ENCODE measurements at regions of chr20 and their contacts with region 1.

Region 1: DNA sequence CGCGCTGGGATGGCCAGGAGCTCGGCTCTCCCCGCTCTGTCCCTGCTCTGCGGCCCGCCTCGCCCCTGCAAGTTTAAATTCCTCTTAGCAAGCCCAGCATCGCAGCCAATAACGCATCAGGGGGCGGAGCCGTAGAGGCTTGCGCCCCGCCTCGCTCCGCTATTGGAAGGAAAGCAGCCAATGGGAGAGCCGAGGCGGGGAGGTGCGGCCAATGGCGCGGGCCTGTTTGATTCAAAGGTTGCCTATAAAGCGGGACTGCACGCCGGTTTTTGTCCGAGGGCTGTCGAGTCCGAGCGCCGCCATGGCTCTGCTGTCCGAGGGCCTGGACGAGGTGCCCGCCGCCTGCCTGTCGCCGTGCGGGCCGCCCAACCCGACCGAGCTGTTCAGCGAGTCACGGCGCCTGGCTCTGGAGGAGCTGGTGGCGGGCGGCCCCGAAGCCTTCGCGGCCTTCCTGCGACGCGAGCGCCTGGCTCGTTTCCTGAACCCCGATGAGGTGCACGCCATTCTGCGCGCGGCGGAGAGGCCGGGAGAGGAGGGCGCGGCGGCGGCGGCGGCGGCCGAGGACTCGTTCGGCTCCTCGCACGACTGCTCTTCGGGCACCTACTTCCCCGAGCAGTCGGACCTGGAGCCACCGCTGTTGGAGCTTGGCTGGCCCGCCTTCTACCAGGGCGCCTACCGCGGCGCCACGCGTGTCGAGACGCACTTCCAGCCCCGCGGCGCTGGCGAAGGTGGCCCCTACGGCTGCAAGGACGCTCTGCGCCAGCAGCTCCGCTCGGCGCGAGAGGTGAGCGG is at the start of gene FAM83D:
- DNase-seq: peak; percentile 91 to 96
- ATAC-seq: peak; percentile 95 to 96 (median 95)
- H3K4me3 ChIP-seq: peak within 1 kb of the TSS; percentile 42
- H3K4me3 Mint-ChIP-seq: peak within 1 kb of the TSS; percentile 86
- H3K27ac ChIP-seq: no peak within 1 kb of the TSS
- H3K27ac Mint-ChIP-seq: peak within 1 kb of the TSS; percentile 10 to 58
- H3K4me1 ChIP-seq: peaks cover 32% of the 10 kb centered on the region
- H3K4me1 Mint-ChIP-seq: peaks cover 13 to 18% of the 10 kb centered on the region in 2 donors
- H3K27me3 ChIP-seq: no peaks in the 10 kb centered on the region
- H3K27me3 Mint-ChIP-seq: no peaks in the 10 kb centered on the region
- CTCF ChIP-seq: peak; percentile 4
- total RNA-seq, gene FAM83D: 1.1 to 2.7 (median 2.1) TPM

Region 2: GRCh38 chr20:38962044-38962927 is 35.9 kb after region 1 on chr20 and contains the start of gene DHX35:
- intact Hi-C with region 1: loop called (anchors 1 kb)
- DNase-seq: peak; percentile 99 to 100
- ATAC-seq: peak; percentile 99 to 100 (median 99)
- H3K4me3 ChIP-seq: peak within 1 kb of the TSS; percentile 78
- H3K4me3 Mint-ChIP-seq: peak within 1 kb of the TSS; percentile 96
- H3K27ac ChIP-seq: peak within 1 kb of the TSS; percentile 78
- H3K27ac Mint-ChIP-seq: peak within 1 kb of the TSS; percentile 94 to 97
- H3K4me1 ChIP-seq: peaks cover 10% of the 10 kb centered on the region
- H3K4me1 Mint-ChIP-seq: peaks cover 18 to 19% of the 10 kb centered on the region in 2 donors
- H3K27me3 ChIP-seq: no peaks in the 10 kb centered on the region
- H3K27me3 Mint-ChIP-seq: no peaks in the 10 kb centered on the region
- CTCF ChIP-seq: no peak
- total RNA-seq, gene DHX35: 8.8 to 11.4 (median 10.2) TPM

Region 3: GRCh38 chr20:38997622-38998021 is 71.3 kb after region 1 on chr20:
- intact Hi-C with region 1: no loop called
- DNase-seq: peak in 1 of 2 donors; percentile 24
- ATAC-seq: peak in 2 of 3 donors; percentile 15 to 24
- H3K4me3 ChIP-seq: no peak overlapping the region
- H3K4me3 Mint-ChIP-seq: no peak overlapping the region
- H3K27ac ChIP-seq: no peak overlapping the region
- H3K27ac Mint-ChIP-seq: peak overlapping the region in 1 of 2 donors; percentile 14
- H3K4me1 ChIP-seq: no peaks in the 10 kb centered on the region
- H3K4me1 Mint-ChIP-seq: peaks cover 0 to 15% of the 10 kb centered on the region in 2 donors
- H3K27me3 ChIP-seq: no peaks in the 10 kb centered on the region
- H3K27me3 Mint-ChIP-seq: no peaks in the 10 kb centered on the region
- CTCF ChIP-seq: no peak

Region 4: GRCh38 chr20:39885975-39886649 is 959.8 kb after region 1 on chr20:
- intact Hi-C with region 1: no loop called
- DNase-seq: peak in 1 of 2 donors; percentile 13
- ATAC-seq: no peak
- H3K4me3 ChIP-seq: no peak overlapping the region
- H3K4me3 Mint-ChIP-seq: no peak overlapping the region
- H3K27ac ChIP-seq: no peak overlapping the region
- H3K27ac Mint-ChIP-seq: no peak overlapping the region
- H3K4me1 ChIP-seq: no peaks in the 10 kb centered on the region
- H3K4me1 Mint-ChIP-seq: no peaks in the 10 kb centered on the region
- H3K27me3 ChIP-seq: no peaks in the 10 kb centered on the region
- H3K27me3 Mint-ChIP-seq: no peaks in the 10 kb centered on the region
- CTCF ChIP-seq: no peak

Measured in natural killer cell (primary cell).